ENCODE measurements at regions of chr16 and their contacts with region 1.

Region 1: GRCh38 chr16:68264128-68265077 is at the start of gene SLC7A6:
- DNase-seq: peak; percentile 60
- H3K4me3 Mint-ChIP-seq: peak within 1 kb of the TSS; percentile 97
- H3K27ac Mint-ChIP-seq: peak within 1 kb of the TSS; percentile 92
- H3K4me1 Mint-ChIP-seq: peaks cover 22% of the 10 kb centered on the region
- H3K27me3 Mint-ChIP-seq: no peaks in the 10 kb centered on the region
- CTCF ChIP-seq: peak; percentile 81
- total RNA-seq, gene SLC7A6: 45.3 and 61.0 TPM in 2 replicates

Region 2: GRCh38 chr16:68251832-68252231 is 12.6 kb before region 1 on chr16:
- CTCF ChIA-PET with region 1: interaction called, 31 read pairs
- POLR2A ChIA-PET with region 1: interaction called, 20 read pairs
- intact Hi-C with region 1: no loop called
- DNase-seq: no peak
- H3K4me3 Mint-ChIP-seq: no peak overlapping the region
- H3K27ac Mint-ChIP-seq: no peak overlapping the region
- H3K4me1 Mint-ChIP-seq: peaks cover under 1% of the 10 kb centered on the region
- H3K27me3 Mint-ChIP-seq: no peaks in the 10 kb centered on the region
- CTCF ChIP-seq: no peak

Region 3: GRCh38 chr16:68289621-68290329 is 25.4 kb after region 1 on chr16:
- CTCF ChIA-PET with region 1: interaction called, 46 read pairs
- POLR2A ChIA-PET with region 1: interaction called, 11 read pairs
- intact Hi-C with region 1: no loop called
- DNase-seq: no peak
- H3K4me3 Mint-ChIP-seq: no peak overlapping the region
- H3K27ac Mint-ChIP-seq: no peak overlapping the region
- H3K4me1 Mint-ChIP-seq: peaks cover 23% of the 10 kb centered on the region
- H3K27me3 Mint-ChIP-seq: no peaks in the 10 kb centered on the region
- CTCF ChIP-seq: no peak

Region 4: GRCh38 chr16:68310761-68311511 is 46.5 kb after region 1 on chr16 and contains the starts of genes PRMT7 and SLC7A6OS:
- CTCF ChIA-PET with region 1: interaction called, 308 read pairs
- POLR2A ChIA-PET with region 1: interaction called, 74 read pairs
- intact Hi-C with region 1: loop called (anchors 2 kb)
- DNase-seq: peak; percentile 90
- H3K4me3 Mint-ChIP-seq: peak within 1 kb of the TSS; percentile 97
- H3K27ac Mint-ChIP-seq: peak within 1 kb of the TSS; percentile 87
- H3K4me1 Mint-ChIP-seq: peaks cover 16% of the 10 kb centered on the region
- H3K27me3 Mint-ChIP-seq: no peaks in the 10 kb centered on the region
- CTCF ChIP-seq: no peak
- total RNA-seq, gene PRMT7: 28.0 and 33.2 TPM in 2 replicates
- total RNA-seq, gene SLC7A6OS: 19.4 and 20.4 TPM in 2 replicates

Region 5: DNA sequence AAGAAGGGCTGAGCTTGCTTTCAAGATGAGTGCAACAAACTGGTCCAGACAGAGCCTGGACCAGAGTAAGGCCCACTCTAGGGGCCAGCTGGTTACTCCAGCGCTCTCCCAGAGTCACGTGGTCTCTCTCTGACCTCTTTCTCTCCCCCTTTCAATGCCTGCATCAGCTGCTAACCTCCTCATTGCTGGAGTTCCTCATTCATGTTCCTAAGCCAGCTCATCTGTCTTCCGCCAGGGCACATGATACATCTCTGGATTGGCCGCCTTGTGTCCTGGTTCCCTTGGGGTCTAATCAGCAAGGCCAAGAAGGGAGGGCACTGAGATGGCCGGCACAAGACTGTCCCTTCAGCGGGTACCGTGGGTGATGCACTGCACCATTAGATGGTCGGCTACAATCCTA is 247.8 kb after region 1 on chr16:
- CTCF ChIA-PET with region 1: interaction called, 6 read pairs
- POLR2A ChIA-PET with region 1: no interaction called
- intact Hi-C with region 1: loop called (anchors 5 kb)
- DNase-seq: no peak
- H3K4me3 Mint-ChIP-seq: no peak overlapping the region
- H3K27ac Mint-ChIP-seq: no peak overlapping the region
- H3K4me1 Mint-ChIP-seq: no peaks in the 10 kb centered on the region
- H3K27me3 Mint-ChIP-seq: peaks cover 28% of the 10 kb centered on the region
- CTCF ChIP-seq: no peak

Measured in MCF 10A (cell line).